ENCODE measurements at regions of chr16 and their contacts with region 1.

Region 1: GRCh38 chr16:77788181-77789084 is at the start of gene VAT1L:
- DNase-seq: no peak
- H3K4me3 ChIP-seq: peak within 1 kb of the TSS; percentile 85
- CTCF ChIP-seq: no peak

Region 2: DNA sequence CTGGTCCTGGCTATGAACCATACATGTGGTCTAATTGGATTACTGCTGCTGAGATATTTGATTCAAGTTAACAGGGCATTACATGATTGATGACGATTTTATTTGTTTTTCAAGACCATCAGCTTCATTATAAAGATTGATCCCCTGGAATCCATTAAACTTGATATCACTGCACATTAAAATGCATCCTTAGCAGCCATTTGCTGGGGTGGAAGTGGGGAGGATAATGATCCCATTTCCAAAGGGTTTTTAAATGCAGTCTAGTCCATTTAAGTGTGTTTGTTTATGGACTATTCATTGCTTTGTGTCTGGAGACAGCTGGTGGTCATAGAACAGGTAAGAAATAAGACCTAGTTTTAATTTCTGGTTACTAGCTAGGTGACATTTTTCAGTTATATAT is 394.5 kb before region 1 on chr16:
- CTCF ChIA-PET with region 1: no interaction called
- POLR2A ChIA-PET with region 1: no interaction called
- DNase-seq: no peak
- H3K4me3 ChIP-seq: no peak overlapping the region
- CTCF ChIP-seq: no peak

Region 3: GRCh38 chr16:77801817-77802216 is 13.4 kb after region 1 on chr16:
- CTCF ChIA-PET with region 1: interaction called, 10 read pairs
- POLR2A ChIA-PET with region 1: interaction called, 4 read pairs
- DNase-seq: no peak
- H3K4me3 ChIP-seq: no peak overlapping the region
- CTCF ChIP-seq: no peak

Region 4: DNA sequence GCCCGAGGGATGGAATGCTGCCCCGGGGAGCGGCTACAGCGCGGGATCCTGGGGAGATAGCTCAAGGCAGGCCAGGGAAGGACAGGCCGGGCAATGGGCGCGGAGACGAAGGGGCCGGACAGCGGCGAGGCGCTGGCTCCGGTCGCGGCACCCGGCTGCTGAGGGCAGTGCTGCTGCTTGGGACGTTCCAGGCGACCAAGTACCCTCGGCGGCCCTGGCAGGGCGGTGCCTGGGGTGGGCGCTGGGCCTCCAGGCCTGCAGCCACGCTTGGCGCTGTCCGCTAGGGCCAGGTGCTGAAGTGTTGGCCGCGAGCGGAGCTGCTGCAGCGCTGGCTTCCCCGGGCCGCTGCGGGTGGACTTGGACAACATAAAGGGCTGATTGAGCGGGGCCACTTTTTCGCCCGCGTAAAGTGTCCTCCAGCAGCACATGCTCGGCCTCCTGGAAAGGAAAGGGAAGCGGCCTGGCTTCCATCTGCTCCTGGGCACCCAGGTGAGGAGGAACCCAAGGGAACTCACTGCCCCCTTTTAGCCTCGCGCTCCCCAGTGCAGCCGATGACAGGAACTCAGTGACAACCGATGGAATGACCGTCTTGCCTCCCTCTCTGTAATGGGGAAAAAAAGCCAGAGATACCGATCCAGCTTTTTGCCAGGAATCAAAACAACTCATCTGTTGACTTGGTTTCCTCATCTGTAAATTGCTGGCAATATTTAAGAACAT is 257.6 kb after region 1 on chr16:
- CTCF ChIA-PET with region 1: no interaction called
- POLR2A ChIA-PET with region 1: no interaction called
- DNase-seq: no peak
- H3K4me3 ChIP-seq: no peak overlapping the region
- CTCF ChIP-seq: peak; percentile 6

Measured in AG04449 (cell line).